ENCODE measurements at regions of chr10 and their contacts with region 1.

Region 1: GRCh38 chr10:96719850-96720421 is 378 bp downstream of the PIK3AP1 start:
- DNase-seq: peak; percentile 79
- ATAC-seq: peak; percentile 68
- H3K4me3 Mint-ChIP-seq: peak overlapping the region; percentile 100
- H3K27ac Mint-ChIP-seq: peak overlapping the region; percentile 97
- H3K4me1 Mint-ChIP-seq: peaks cover 80% of the 10 kb centered on the region
- H3K27me3 Mint-ChIP-seq: no peaks in the 10 kb centered on the region
- CTCF ChIP-seq: peak; percentile 83

Region 2: GRCh38 chr10:96463562-96463961 is 256.4 kb before region 1 on chr10:
- CTCF ChIA-PET with region 1: no interaction called
- POLR2A ChIA-PET with region 1: interaction called, 13 read pairs
- intact Hi-C with region 1: no loop called
- DNase-seq: no peak
- ATAC-seq: no peak
- H3K4me3 Mint-ChIP-seq: no peak overlapping the region
- H3K27ac Mint-ChIP-seq: no peak overlapping the region
- H3K4me1 Mint-ChIP-seq: no peaks in the 10 kb centered on the region
- H3K27me3 Mint-ChIP-seq: peaks cover 2% of the 10 kb centered on the region
- CTCF ChIP-seq: no peak

Region 3: GRCh38 chr10:96642973-96643372 is 77.0 kb before region 1 on chr10:
- CTCF ChIA-PET with region 1: interaction called, 70 read pairs
- POLR2A ChIA-PET with region 1: interaction called, 9 read pairs
- intact Hi-C with region 1: loop called (anchors 1 kb)
- DNase-seq: peak; percentile 54
- ATAC-seq: no peak
- H3K4me3 Mint-ChIP-seq: no peak overlapping the region
- H3K27ac Mint-ChIP-seq: peak overlapping the region; percentile 56
- H3K4me1 Mint-ChIP-seq: peaks cover 58% of the 10 kb centered on the region
- H3K27me3 Mint-ChIP-seq: no peaks in the 10 kb centered on the region
- CTCF ChIP-seq: no peak

Region 4: DNA sequence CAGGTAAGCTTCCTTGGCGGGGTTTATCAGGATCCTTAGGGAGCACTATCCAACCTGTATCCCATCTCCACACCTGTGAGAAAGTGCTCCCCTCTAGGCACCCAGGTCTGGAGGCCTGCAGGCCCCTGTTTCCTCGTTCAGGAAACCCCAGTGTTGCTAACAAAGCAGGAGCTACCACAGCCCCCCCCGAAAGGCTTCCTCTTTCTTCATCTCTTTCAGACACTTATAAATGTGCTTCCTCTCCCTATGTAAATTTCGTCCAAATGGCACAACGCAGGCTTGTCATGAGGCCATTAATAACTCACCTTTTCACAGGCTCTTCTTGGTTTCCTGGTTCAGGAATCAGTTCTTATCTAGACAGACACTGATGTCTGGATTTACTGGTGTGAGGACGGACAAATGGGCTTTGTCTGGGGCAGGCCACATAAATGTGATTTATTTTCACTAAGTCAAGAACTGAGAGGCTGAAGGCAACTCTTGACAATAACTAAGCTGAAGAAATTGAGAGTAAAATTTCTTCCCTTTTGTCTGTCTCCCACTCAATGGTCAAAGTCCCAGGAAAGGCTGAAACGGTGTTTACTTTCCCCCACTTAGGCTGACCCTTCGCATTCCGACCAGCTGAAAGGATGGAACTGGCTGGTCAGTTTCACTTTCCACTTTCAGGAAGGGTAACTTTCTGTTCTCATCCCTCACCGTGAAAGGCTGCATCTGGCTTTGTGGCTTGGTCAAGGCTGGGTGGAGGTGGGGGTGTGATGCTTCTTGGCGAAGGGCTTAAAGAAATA is 46.4 kb before region 1 on chr10:
- CTCF ChIA-PET with region 1: interaction called, 20 read pairs
- POLR2A ChIA-PET with region 1: interaction called, 13 read pairs
- intact Hi-C with region 1: loop called (anchors 1 kb)
- DNase-seq: peak; percentile 39
- ATAC-seq: peak; percentile 83
- H3K4me3 Mint-ChIP-seq: peak overlapping the region; percentile 77
- H3K27ac Mint-ChIP-seq: peak overlapping the region; percentile 99
- H3K4me1 Mint-ChIP-seq: peaks cover 90% of the 10 kb centered on the region
- H3K27me3 Mint-ChIP-seq: no peaks in the 10 kb centered on the region
- CTCF ChIP-seq: no peak

Region 5: DNA sequence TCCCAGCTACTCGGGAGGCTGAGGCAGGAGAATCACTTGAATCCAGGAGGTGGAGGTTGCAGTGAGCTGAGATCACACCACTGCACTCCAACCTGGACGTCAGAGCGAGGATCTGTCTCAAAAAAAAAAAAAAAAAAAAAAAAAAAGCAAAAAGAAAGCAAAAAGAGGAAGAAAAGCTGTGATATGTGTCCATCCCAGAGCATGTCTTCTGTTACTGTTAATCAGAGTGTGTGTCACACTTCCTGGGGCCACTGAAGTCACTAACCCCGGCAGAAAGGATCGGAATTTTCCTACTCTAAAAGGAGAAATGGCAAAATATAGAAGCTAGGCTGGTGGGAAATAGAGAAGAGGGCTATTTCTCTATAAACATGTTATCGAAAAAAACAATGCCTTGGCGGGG is 11.5 kb before region 1 on chr10:
- CTCF ChIA-PET with region 1: interaction called, 12 read pairs
- POLR2A ChIA-PET with region 1: interaction called, 29 read pairs
- intact Hi-C with region 1: loop called (anchors 1 kb)
- DNase-seq: no peak
- ATAC-seq: peak; percentile 77
- H3K4me3 Mint-ChIP-seq: peak overlapping the region; percentile 69
- H3K27ac Mint-ChIP-seq: peak overlapping the region; percentile 96
- H3K4me1 Mint-ChIP-seq: peaks cover 83% of the 10 kb centered on the region
- H3K27me3 Mint-ChIP-seq: no peaks in the 10 kb centered on the region
- CTCF ChIP-seq: no peak

Region 6: DNA sequence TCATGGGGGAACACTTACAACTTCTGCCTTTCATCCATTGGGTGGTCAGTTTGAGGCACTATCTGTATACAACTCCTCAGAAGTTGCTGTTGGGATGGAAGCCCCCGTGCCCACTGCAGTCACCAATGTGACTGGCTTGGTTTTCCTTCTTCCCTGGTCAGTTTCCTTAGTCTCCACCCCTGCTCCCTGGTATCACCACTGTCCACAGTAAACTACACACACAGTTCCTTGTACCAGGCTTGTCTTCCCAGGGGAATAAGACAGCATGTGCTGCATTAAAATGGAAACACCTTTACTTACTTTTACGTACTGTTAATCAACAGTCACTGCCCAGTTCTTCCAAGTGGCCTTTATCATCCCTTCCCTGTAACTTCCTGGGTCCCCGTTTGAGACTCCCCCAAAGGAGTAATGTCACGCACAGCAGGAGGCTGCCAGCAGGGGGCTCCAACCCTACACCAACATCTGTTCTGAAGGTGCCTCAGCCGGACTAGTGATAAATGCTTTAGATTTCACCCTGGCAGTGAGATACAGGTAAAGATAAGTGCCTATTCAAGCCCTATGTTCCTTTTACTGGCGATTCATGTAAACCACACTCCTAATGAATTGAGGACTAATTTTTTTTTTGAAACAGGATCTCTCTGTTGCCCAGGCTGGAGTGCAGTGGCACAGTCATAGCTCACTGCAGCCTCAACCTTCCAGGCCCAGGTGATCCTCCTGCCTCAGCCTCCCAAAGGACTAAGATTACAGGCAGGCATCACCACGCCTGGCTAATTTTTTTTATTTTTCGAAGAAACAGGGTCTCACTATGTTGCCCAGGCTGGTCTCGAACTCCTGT is 45.7 kb after region 1 on chr10:
- CTCF ChIA-PET with region 1: interaction called, 4 read pairs
- POLR2A ChIA-PET with region 1: interaction called, 9 read pairs
- intact Hi-C with region 1: loop called (anchors 1 kb)
- DNase-seq: peak; percentile 64
- ATAC-seq: peak; percentile 73
- H3K4me3 Mint-ChIP-seq: peak overlapping the region; percentile 53
- H3K27ac Mint-ChIP-seq: peak overlapping the region; percentile 83
- H3K4me1 Mint-ChIP-seq: peaks cover 39% of the 10 kb centered on the region
- H3K27me3 Mint-ChIP-seq: no peaks in the 10 kb centered on the region
- CTCF ChIP-seq: peak; percentile 68

Region 7: DNA sequence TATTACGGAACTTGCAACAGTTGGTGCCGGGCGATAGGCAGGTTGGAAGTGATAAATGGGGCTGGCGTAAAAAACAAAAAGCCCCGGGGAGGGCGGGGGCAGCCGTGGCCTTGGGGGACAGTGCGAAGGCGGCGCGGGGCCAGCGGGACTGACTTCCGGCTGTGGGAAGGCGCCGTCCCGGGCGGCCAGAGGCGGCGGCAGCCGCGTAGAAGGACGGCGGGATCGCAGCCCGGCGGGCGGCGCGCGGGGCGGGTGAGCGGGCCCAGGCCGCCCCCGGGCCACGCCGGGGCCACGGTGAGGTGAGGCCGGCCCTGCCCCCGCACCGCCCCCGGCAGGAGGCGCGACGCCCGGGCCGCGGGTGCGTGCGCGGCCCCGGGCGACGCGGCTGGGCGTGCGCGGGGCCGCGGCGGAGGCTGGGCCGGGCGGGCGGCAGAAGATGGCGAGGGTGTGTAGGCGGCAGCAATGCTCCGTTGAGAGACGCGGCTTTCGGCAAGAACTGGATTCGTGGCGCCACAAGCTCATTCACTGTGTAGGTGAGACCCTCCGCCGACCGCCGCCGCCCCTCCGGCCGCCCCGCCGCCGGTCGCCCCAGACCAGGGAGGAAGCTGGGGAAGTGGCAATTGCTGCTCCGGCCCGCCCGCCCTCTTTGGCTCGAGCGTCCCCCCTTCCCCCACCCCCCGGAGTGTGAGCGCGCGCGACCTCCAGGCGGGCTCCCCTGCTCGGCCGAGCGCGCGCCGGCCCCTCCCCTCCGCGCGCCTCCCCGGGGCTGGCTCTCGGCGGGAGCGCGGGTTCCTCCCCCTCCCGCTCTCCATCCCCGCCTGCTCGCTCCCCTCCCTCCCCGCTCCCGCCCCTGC is 112.2 kb after region 1 on chr10 and contains the start of gene LCOR:
- CTCF ChIA-PET with region 1: interaction called, 3 read pairs
- POLR2A ChIA-PET with region 1: interaction called, 3 read pairs
- intact Hi-C with region 1: loop called (anchors 1 kb)
- DNase-seq: peak; percentile 87
- ATAC-seq: peak; percentile 71
- H3K4me3 Mint-ChIP-seq: peak within 1 kb of the TSS; percentile 87
- H3K27ac Mint-ChIP-seq: peak within 1 kb of the TSS; percentile 94
- H3K4me1 Mint-ChIP-seq: peaks cover 58% of the 10 kb centered on the region
- H3K27me3 Mint-ChIP-seq: no peaks in the 10 kb centered on the region
- CTCF ChIP-seq: no peak
- total RNA-seq, gene LCOR: 42.8 and 54.9 TPM in 2 replicates

Region 8: DNA sequence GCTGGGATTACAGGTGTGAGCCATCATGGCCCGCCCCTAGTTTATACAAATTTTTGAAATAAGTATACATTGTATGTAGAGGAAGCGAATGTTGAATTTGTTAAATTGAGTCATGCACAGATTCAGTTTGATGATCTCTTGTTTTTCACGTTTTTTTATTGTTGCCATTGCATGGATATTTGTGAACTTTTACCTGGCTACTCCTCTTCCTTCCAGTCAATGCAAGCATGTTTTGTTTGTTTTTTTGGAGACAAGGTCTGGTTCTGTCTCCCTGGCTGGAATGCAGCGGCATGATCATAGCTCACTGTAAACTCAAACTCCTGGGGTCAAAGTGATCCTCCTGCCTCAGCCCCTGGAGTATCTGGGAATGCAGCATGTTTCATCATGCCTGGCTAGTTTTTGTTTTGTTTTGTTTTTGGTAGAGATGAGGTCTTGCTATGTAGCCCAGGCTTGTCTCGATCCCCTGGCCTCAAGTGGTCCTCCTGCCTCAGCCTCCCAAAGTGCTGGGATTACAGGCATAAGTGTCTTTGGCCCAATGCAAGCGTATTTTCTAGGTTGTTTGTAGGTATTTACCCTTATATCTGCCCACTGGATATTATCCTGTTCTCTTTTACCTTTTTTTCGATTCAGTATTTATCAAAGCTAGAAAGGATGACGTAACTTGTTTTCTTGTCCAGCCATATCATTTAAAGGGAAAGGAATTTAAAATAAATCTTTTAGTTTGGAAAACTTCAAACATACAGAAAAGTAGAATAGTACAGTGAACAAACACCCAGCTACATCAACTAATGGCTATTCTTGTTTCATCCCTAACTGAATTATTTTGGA is 123.2 kb after region 1 on chr10:
- CTCF ChIA-PET with region 1: no interaction called
- POLR2A ChIA-PET with region 1: no interaction called
- intact Hi-C with region 1: no loop called
- DNase-seq: no peak
- ATAC-seq: no peak
- H3K4me3 Mint-ChIP-seq: no peak overlapping the region
- H3K27ac Mint-ChIP-seq: no peak overlapping the region
- H3K4me1 Mint-ChIP-seq: peaks cover 81% of the 10 kb centered on the region
- H3K27me3 Mint-ChIP-seq: no peaks in the 10 kb centered on the region
- CTCF ChIP-seq: no peak

Region 9: DNA sequence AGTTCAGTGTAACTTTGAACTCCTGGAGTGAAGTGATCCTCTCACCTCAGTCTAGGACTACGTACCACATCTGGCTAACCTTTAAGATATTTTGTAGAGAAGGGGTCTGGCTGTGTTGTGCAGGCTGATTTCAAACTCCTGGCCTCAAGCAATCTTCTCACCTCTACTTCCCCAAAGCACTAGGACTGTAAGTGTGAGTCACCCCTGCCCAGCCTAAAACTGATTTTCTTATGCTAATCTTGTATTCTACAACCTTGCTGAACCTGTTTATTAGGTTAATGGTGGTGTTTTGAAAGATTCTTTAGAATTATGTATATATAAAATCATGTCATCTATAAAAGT is 170.2 kb after region 1 on chr10:
- CTCF ChIA-PET with region 1: no interaction called
- POLR2A ChIA-PET with region 1: no interaction called
- intact Hi-C with region 1: no loop called
- DNase-seq: no peak
- ATAC-seq: peak; percentile 31
- H3K4me3 Mint-ChIP-seq: no peak overlapping the region
- H3K27ac Mint-ChIP-seq: peak overlapping the region; percentile 41
- H3K4me1 Mint-ChIP-seq: peaks cover 38% of the 10 kb centered on the region
- H3K27me3 Mint-ChIP-seq: no peaks in the 10 kb centered on the region
- CTCF ChIP-seq: no peak